Motor neuron (in vitro differentiated cells): ENCODE measurements at regions of chr12 and their contacts with region 1.

Region 1: DNA sequence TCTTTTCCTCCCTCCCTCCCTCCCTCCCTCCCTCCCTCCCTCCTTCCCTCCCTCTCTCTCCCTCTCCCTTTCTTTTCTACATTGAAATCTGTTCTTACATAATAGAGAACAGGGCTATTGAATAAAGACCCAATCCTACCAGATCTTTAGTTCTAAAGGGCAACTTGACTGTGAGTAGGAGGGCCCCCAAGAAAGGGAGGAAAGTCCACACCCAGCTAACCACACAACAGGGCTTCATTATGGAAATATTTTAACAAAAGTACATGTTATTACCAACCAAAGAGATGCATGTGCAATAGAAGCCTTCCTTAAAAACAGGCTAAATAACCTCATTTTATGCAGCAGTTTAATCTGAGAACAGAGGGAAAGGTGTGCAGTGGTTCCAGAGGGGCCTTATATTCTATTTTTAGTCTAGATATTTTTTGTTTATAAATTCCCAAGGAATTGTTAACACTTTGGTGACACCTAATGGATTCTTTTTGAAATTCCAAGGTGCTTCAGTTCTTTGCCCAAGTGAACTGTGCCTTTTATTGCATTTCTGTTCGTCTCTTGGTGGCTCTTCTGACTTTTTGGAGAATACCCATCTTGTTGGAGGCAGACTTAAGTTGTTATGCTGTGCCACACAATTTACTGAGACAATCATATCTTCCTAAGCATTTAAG is 63.0 kb downstream of the GNS start:
- ATAC-seq: peak in 6 of 8 experiments; percentile 27 to 70 (median 39)
- H3K4me3 ChIP-seq: no peak overlapping the region
- H3K27ac ChIP-seq: no peak overlapping the region
- H3K4me1 ChIP-seq: peaks cover 7 to 10% of the 10 kb centered on the region in 2 donors

Region 2: DNA sequence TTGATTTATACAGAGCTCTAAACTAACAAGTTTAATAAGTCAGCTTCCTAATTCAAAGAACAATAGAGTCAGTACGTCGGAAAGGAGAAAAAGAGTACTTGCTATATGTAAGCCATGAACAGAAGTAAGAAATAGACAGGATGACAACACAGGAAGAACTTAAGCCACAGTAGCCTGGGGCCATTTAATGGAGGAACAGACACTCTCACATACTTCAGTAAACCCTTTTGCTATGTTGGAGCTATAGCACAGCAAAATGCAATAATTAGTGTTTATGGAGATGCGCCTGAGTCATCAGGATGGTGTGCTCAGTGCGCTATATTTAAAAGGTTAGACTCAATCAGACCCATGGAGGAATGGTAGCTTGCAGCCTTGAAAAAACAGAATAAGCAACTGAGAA is 790.7 kb before region 1 on chr12:
- in situ Hi-C with region 1: no loop called
- ATAC-seq: peak in 5 of 8 experiments; percentile 45 to 80 (median 67)
- H3K4me3 ChIP-seq: no peak overlapping the region
- H3K27ac ChIP-seq: no peak overlapping the region
- H3K4me1 ChIP-seq: peaks cover 4 to 5% of the 10 kb centered on the region in 2 donors

Region 3: GRCh38 chr12:64544371-64545080 is 151.7 kb before region 1 on chr12:
- in situ Hi-C with region 1: loop called in 3 of 9 experiments (anchors 10 to 25 kb)
- ATAC-seq: peak; percentile 80 to 92 (median 89)
- H3K4me3 ChIP-seq: no peak overlapping the region
- H3K27ac ChIP-seq: no peak overlapping the region
- H3K4me1 ChIP-seq: peaks cover 0 to 3% of the 10 kb centered on the region in 2 donors

Region 4: GRCh38 chr12:64551698-64552097 is 144.5 kb before region 1 on chr12:
- in situ Hi-C with region 1: loop called in 6 of 9 experiments (anchors 10 to 25 kb)
- ATAC-seq: no peak
- H3K4me3 ChIP-seq: no peak overlapping the region
- H3K27ac ChIP-seq: no peak overlapping the region
- H3K4me1 ChIP-seq: no peaks in the 10 kb centered on the region

Region 5: DNA sequence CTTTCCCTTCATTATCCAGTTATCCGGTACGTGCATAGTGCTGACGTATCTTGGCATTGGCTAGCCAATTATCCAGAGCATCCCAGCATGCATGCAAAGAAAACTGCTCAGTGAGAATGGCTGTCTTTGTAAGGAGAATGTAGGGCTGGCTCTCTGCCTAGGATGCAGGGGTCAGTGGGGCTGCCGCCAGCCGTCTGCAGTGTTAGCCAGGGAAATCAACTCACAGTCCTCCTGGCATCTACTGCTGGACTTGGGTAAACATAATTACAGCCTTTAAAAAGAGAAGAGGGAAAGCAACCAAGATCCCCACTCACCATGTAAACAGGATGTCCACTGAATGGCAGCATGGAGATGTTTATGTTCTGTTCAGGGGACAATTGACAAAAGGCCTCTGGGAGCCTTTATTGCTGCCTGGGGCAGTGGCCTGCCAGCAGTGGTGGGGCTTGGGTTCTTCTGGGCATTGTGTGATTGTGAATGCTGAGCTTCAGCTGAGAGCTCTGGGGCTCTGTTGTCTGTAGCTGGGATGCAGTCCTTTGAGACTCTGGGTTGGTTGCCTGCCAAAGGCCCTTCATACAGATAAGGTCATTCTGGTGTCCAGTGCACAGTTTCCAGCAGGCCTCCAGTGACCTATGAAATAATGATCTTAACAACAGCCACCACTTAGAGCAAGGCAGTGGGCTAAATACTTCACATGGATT is 250.1 kb after region 1 on chr12:
- in situ Hi-C with region 1: no loop called
- ATAC-seq: peak in 3 of 8 experiments; percentile 69 to 86 (median 74)
- H3K4me3 ChIP-seq: no peak overlapping the region
- H3K27ac ChIP-seq: no peak overlapping the region
- H3K4me1 ChIP-seq: no peaks in the 10 kb centered on the region